ENCODE measurements at regions of chr19 and their contacts with region 1.

Region 1: DNA sequence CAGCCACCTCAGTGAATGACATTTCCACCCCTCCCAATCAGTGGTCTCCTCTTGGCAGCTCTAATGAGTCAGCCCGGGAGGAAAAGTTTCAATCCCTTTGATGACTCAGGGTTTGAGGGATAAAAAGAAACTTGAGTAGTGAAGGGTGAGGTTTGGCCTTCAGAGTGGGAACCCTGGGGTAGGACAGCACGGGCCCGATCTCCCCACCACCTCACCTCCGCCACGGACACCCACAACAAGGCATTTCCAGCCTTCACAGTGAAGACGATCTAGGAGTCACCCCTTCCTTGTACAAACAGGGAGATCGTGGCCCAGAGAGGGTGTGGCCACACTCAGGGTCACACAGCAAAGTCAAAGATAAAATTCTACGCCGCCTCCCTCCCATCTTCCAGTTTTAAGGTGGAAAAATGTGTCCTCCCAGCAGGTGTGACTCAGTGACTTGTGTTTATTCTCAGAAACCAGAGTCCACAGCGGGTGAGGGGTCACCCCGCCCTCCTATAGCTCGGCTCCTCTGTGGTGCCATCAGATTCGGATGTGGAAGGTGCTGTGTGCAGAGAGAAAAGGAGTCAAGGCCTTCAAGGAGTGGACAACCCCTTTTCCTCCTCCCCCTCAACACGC is 12.3 kb downstream of the CIB3 start:
- DNase-seq: peak; percentile 68
- H3K4me3 Mint-ChIP-seq: peak overlapping the region; percentile 68
- H3K27ac Mint-ChIP-seq: peak overlapping the region; percentile 86
- H3K4me1 Mint-ChIP-seq: peaks cover 17% of the 10 kb centered on the region
- H3K27me3 Mint-ChIP-seq: no peaks in the 10 kb centered on the region

Region 2: GRCh38 chr19:16098845-16099244 is 62.2 kb before region 1 on chr19:
- intact Hi-C with region 1: no loop called
- DNase-seq: no peak
- H3K4me3 Mint-ChIP-seq: no peak overlapping the region
- H3K27ac Mint-ChIP-seq: no peak overlapping the region
- H3K4me1 Mint-ChIP-seq: peaks cover 20% of the 10 kb centered on the region
- H3K27me3 Mint-ChIP-seq: no peaks in the 10 kb centered on the region

Region 3: GRCh38 chr19:16111160-16111908 is 49.7 kb before region 1 on chr19 and contains the start of gene RAB8A:
- intact Hi-C with region 1: loop called (anchors 2 kb)
- DNase-seq: peak; percentile 100
- H3K4me3 Mint-ChIP-seq: peak within 1 kb of the TSS; percentile 95
- H3K27ac Mint-ChIP-seq: peak within 1 kb of the TSS; percentile 95
- H3K4me1 Mint-ChIP-seq: peaks cover 26% of the 10 kb centered on the region
- H3K27me3 Mint-ChIP-seq: no peaks in the 10 kb centered on the region
- total RNA-seq, gene RAB8A: 227 and 247 TPM in 2 replicates

Region 4: GRCh38 chr19:16118489-16119033 is 42.5 kb before region 1 on chr19:
- intact Hi-C with region 1: loop called (anchors 1 kb)
- DNase-seq: peak; percentile 82
- H3K4me3 Mint-ChIP-seq: peak overlapping the region; percentile 73
- H3K27ac Mint-ChIP-seq: peak overlapping the region; percentile 94
- H3K4me1 Mint-ChIP-seq: peaks cover 46% of the 10 kb centered on the region
- H3K27me3 Mint-ChIP-seq: no peaks in the 10 kb centered on the region

Region 5: GRCh38 chr19:16143399-16144245 is 17.4 kb before region 1 on chr19 and contains the start of gene HSH2D:
- intact Hi-C with region 1: loop called (anchors 2 kb)
- DNase-seq: peak; percentile 95
- H3K4me3 Mint-ChIP-seq: peak within 1 kb of the TSS; percentile 96
- H3K27ac Mint-ChIP-seq: peak within 1 kb of the TSS; percentile 98
- H3K4me1 Mint-ChIP-seq: peaks cover 45% of the 10 kb centered on the region
- H3K27me3 Mint-ChIP-seq: no peaks in the 10 kb centered on the region
- total RNA-seq, gene HSH2D: 22.7 and 23.1 TPM in 2 replicates